ENCODE measurements at regions of chr1 and their contacts with region 1.

Region 1: DNA sequence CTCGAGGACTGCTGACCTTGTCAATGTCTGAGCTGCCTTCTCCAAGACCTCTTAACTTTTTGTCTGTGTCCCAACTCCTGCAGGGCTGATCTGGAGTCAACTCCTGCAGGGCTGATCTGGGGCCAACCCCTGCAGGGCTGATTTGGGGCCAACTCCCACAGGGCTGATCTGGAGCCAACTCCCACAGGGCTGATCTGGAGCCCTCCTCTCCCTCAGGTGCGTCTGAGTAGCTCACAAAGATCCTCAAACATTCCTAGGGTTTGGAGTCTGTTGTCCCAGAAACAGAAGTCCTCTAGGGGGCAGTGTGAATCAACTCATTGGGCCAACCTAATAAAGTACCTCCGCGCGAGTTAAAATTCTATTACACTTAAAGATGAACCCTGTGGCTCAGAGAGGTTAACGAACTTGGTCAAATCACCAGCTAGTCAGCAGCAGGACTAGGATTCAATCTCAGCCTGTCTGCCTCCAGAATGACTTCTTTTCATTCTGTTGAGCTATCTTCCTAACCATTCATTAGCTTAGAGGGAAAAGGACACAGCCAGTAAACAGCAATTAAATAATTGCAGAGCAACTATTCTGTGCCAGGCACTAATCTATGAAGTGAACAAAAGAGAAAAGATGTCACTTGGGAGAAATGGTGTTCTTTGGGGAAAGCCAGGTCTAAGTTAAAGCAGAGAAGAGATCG is 17.2 kb upstream of the RLF start:
- DNase-seq: peak; percentile 39
- ATAC-seq: peak; percentile 96
- H3K4me3 ChIP-seq: no peak overlapping the region
- H3K27ac ChIP-seq: no peak overlapping the region
- H3K4me1 ChIP-seq: no peaks in the 10 kb centered on the region
- H3K27me3 ChIP-seq: no peaks in the 10 kb centered on the region; a peak in 1 of 4 replicates
- CTCF ChIP-seq: peak; percentile 69 to 84 (median 72)
- EP300 ChIP-seq: no peak
- POLR2A ChIP-seq: no peak
- RAD21 ChIP-seq: peak; percentile 95

Region 2: GRCh38 chr1:39491146-39491921 is 652.7 kb before region 1 on chr1 and contains the start of gene BMP8A:
- CTCF ChIA-PET with region 1: no interaction called
- POLR2A ChIA-PET with region 1: no interaction called
- RAD21 ChIA-PET with region 1: no interaction called
- SMC1A ChIA-PET with region 1: no interaction called
- in situ Hi-C with region 1: no loop called
- intact Hi-C with region 1: no loop called
- DNase-seq: no peak
- ATAC-seq: peak; percentile 89
- H3K4me3 ChIP-seq: peak within 1 kb of the TSS; percentile 36; the same call in 1 of the 2 replicates
- H3K27ac ChIP-seq: no peak within 1 kb of the TSS
- H3K4me1 ChIP-seq: 0 out of 2 replicates have a peak, but pooled peaks cover 2% of the 10 kb centered on the region
- H3K27me3 ChIP-seq: peaks cover 0 to 1% of the 10 kb centered on the region in 2 experiments; a peak in 1 of 4 replicates
- CTCF ChIP-seq: no peak
- EP300 ChIP-seq: no peak
- POLR2A ChIP-seq: peak; percentile 39
- RAD21 ChIP-seq: no peak
- polyA plus RNA-seq, gene BMP8A: not detected

Region 3: DNA sequence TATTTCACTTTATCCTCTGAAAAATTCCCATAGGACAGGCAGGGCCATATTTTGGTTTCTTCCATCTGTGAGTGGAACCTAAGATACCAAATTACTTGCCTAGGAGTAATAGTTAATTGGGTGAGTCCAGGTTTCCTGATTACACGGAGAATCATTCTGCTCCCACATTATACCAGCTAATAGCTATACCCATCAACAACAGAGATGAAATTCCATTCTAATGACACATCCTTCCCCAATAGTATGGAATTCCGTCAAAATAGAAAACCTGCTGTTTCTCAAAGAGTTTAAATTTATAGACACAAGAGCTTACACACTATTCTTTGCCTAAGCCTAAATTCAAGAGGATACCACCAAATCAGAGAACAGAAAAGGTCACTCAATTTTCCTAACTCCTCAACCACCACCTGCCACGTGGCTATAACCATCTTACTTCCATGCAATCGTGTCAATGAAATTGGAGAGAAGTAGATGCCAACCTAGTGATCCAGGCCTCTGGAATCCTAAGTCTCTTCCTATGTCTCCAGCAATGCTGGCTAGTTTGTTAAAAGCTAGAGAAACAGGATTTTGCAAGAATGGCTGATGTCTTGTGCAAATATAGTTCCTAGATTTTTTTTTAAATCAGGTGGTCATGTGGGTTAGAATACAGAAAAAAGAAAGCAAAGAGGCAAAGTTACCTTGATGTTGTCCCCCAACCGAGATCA is 53.2 kb before region 1 on chr1:
- CTCF ChIA-PET with region 1: interaction called, 8 read pairs
- POLR2A ChIA-PET with region 1: no interaction called
- RAD21 ChIA-PET with region 1: interaction called, 4 read pairs
- SMC1A ChIA-PET with region 1: interaction called, 10 read pairs
- in situ Hi-C with region 1: no loop called
- intact Hi-C with region 1: no loop called
- DNase-seq: no peak
- ATAC-seq: no peak
- H3K4me3 ChIP-seq: no peak overlapping the region
- H3K27ac ChIP-seq: no peak overlapping the region
- H3K4me1 ChIP-seq: no peaks in the 10 kb centered on the region
- H3K27me3 ChIP-seq: no peaks in the 10 kb centered on the region
- CTCF ChIP-seq: no peak
- EP300 ChIP-seq: no peak
- POLR2A ChIP-seq: no peak
- RAD21 ChIP-seq: no peak

Region 4: DNA sequence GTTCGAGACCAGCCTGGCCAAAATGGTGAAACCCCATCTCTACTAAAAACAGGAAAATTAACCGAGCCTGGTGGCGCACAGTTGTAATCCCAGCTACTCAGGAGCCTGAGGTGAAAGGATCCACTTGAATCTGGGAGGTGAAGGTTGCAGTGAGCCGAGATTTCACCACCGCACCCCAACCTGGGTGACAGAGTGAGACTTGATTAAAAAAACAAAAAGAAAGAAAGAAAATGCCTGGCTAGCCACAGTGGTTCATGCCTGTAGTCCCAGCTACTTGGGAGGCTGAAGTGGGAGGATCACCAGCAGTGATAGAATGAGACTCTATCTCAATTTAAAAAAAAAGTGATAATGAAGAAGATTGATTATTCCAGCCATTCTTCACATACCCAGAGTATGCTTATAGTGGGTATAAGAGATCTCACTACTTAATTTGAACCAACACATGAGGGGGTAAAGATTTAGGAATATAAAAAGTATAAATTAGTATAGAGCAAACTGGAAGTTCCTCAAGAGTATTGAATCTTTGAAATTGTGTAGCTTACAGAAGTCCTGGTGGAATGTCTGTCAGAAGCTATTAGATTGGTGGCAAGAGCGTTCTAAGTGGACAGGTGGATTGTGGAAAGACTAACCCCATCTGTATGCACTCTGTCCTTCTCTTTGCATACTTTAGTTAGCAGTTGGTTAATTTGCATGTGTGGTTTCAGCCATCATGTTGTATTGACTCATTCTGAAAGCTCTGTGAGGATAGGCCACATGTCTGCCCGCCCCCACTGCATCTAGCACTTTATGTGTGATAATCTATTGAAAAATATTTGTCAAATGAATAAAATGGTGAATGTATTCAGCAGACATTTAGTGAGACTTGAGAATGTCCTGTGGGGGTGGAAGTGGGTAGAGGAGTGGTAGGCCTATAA is 42.2 kb after region 1 on chr1:
- CTCF ChIA-PET with region 1: interaction called, 14 read pairs
- POLR2A ChIA-PET with region 1: interaction called, 3 read pairs
- RAD21 ChIA-PET with region 1: interaction called, 5 read pairs
- SMC1A ChIA-PET with region 1: interaction called, 3 read pairs
- in situ Hi-C with region 1: no loop called
- intact Hi-C with region 1: no loop called
- DNase-seq: peak; percentile 82
- ATAC-seq: peak; percentile 99
- H3K4me3 ChIP-seq: peak overlapping the region; percentile 60
- H3K27ac ChIP-seq: peak overlapping the region; percentile 71
- H3K4me1 ChIP-seq: peaks cover 32% of the 10 kb centered on the region
- H3K27me3 ChIP-seq: no peaks in the 10 kb centered on the region
- CTCF ChIP-seq: no peak
- EP300 ChIP-seq: peak; percentile 94
- POLR2A ChIP-seq: peak; percentile 57
- RAD21 ChIP-seq: no peak

Region 5: DNA sequence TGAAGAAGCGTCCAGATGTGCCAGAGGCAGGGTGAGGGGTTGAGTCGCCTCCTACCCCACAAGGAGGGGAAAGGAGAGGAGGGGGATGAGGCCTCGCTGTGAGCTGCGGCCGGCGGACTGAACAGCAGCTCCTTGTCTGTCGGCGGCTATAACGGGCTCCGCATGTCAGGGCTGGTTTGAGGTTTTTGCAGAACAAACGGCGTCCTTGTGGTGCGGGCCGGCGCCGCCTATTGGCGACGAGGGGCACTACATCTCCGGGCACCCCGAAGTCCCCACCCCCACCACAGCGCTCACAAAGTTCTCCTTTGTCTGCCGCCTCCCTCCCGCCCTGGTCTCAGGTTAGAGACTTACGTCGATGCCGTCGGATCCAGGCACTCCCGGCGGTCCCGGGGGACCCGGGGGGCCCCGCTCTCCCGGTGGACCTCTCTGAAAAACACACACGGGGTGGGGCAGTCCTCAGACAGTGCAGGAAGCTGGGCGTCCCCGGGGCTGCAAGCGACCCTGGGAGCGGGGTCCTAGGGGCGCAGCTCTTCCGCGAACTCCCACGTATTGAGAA is 171.3 kb after region 1 on chr1:
- CTCF ChIA-PET with region 1: interaction called, 125 read pairs
- POLR2A ChIA-PET with region 1: interaction called, 4 read pairs
- RAD21 ChIA-PET with region 1: interaction called, 24 read pairs
- SMC1A ChIA-PET with region 1: interaction called, 25 read pairs
- in situ Hi-C with region 1: no loop called
- intact Hi-C with region 1: no loop called
- DNase-seq: peak; percentile 53
- ATAC-seq: peak; percentile 72
- H3K4me3 ChIP-seq: peak overlapping the region; percentile 70
- H3K27ac ChIP-seq: peak overlapping the region; percentile 59
- H3K4me1 ChIP-seq: peaks cover 41% of the 10 kb centered on the region
- H3K27me3 ChIP-seq: peaks cover 4 to 9% of the 10 kb centered on the region in 2 experiments; a peak in 3 of 4 replicates
- CTCF ChIP-seq: peak; percentile 96 to 98 (median 98)
- EP300 ChIP-seq: peak in 1 of 2 experiments; percentile 24; a peak in 1 of 4 replicates
- POLR2A ChIP-seq: peak; percentile 87
- RAD21 ChIP-seq: peak; percentile 69

Region 6: DNA sequence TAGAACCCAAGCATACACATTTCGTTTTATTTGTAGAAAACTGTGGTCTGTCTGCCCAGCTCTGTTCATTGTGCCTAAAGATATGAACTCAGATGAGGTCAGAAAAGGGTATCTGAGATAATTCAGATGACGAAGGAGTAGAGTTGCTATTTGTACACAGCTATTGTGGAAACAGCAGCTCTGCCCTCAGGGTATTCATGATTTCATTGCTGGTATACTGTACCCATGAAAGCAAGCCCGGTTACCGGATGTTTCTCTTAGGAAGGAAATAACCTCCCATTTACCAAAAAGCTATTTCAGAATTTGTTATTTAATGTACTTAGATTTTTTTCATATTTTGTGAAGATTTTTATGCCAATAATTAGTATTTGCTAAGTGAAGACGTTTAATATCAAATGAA is 267.3 kb after region 1 on chr1:
- CTCF ChIA-PET with region 1: interaction called, 12 read pairs
- POLR2A ChIA-PET with region 1: no interaction called
- RAD21 ChIA-PET with region 1: interaction called, 4 read pairs
- SMC1A ChIA-PET with region 1: interaction called, 6 read pairs
- in situ Hi-C with region 1: no loop called
- intact Hi-C with region 1: no loop called
- DNase-seq: no peak
- ATAC-seq: no peak
- H3K4me3 ChIP-seq: no peak overlapping the region
- H3K27ac ChIP-seq: no peak overlapping the region
- H3K4me1 ChIP-seq: no peaks in the 10 kb centered on the region
- H3K27me3 ChIP-seq: no peaks in the 10 kb centered on the region
- CTCF ChIP-seq: no peak
- EP300 ChIP-seq: no peak
- POLR2A ChIP-seq: no peak
- RAD21 ChIP-seq: no peak

Measured in GM12878 (cell line).